Activated CD8-positive, alpha-beta memory T cell treated with anti-CD3 and anti-CD28 coated beads, Interleukin-2, amount 10 ng/mL, durations not matched to agents 7 days and 5 days (primary cell): ENCODE measurements at regions of chr5 and their contacts with region 1.

Region 1: DNA sequence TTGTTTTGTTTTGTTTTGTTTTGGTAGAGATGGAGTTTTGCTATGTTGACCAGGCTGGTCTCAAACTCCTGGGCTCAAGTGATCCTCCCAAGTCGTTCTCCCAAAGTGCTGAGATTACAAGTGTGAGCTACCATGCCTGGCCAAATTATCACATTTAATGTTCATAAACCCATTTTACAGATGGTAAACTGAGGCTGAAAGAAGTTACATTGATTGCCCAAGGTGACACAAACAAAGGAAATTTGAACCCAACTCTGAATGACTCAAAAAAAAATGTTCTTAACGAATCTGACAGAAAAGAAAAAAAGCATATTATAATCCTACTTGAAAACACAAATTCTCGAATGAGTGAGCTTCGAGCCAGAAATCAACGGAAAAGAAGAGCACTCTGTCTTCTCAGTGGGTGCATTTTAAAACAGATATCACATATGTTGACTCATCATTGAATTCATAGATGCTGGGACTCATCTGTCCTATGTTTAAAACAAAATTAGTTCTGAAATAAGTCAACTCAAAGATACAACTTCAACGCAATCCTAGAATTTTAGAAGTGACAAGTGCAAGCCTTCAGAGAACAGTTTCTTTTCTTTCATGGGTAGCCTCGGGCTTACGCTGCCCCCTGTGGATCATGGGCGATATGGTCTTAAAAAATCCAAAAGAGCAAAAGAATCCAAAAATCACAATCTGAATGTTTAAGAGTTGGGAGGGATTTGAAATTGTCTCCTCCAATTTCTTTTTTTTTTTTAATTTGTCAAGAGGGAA is 28.4 kb downstream of the TIMD4 start:
- DNase-seq: peak; percentile 80
- ATAC-seq: peak; percentile 84
- H3K4me3 Mint-ChIP-seq: peak overlapping the region; percentile 29
- H3K27ac Mint-ChIP-seq: peak overlapping the region; percentile 78
- H3K4me1 Mint-ChIP-seq: peaks cover 60% of the 10 kb centered on the region
- H3K27me3 Mint-ChIP-seq: no peaks in the 10 kb centered on the region

Region 2: GRCh38 chr5:156686796-156687195 is 247.8 kb before region 1 on chr5:
- CTCF ChIA-PET with region 1: no interaction called
- DNase-seq: no peak
- ATAC-seq: no peak
- H3K4me3 Mint-ChIP-seq: no peak overlapping the region
- H3K27ac Mint-ChIP-seq: no peak overlapping the region
- H3K4me1 Mint-ChIP-seq: no peaks in the 10 kb centered on the region
- H3K27me3 Mint-ChIP-seq: peaks cover 70% of the 10 kb centered on the region

Region 3: GRCh38 chr5:156755421-156756087 is 179.1 kb before region 1 on chr5:
- CTCF ChIA-PET with region 1: no interaction called
- DNase-seq: no peak
- ATAC-seq: no peak
- H3K4me3 Mint-ChIP-seq: no peak overlapping the region
- H3K27ac Mint-ChIP-seq: no peak overlapping the region
- H3K4me1 Mint-ChIP-seq: peaks cover 8% of the 10 kb centered on the region
- H3K27me3 Mint-ChIP-seq: peaks cover 2% of the 10 kb centered on the region

Region 4: GRCh38 chr5:156913719-156914370 is 20.8 kb before region 1 on chr5:
- CTCF ChIA-PET with region 1: interaction called, 26 read pairs
- DNase-seq: peak; percentile 64
- ATAC-seq: peak; percentile 87
- H3K4me3 Mint-ChIP-seq: peak overlapping the region; percentile 57
- H3K27ac Mint-ChIP-seq: peak overlapping the region; percentile 97
- H3K4me1 Mint-ChIP-seq: peaks cover 37% of the 10 kb centered on the region
- H3K27me3 Mint-ChIP-seq: no peaks in the 10 kb centered on the region

Region 5: DNA sequence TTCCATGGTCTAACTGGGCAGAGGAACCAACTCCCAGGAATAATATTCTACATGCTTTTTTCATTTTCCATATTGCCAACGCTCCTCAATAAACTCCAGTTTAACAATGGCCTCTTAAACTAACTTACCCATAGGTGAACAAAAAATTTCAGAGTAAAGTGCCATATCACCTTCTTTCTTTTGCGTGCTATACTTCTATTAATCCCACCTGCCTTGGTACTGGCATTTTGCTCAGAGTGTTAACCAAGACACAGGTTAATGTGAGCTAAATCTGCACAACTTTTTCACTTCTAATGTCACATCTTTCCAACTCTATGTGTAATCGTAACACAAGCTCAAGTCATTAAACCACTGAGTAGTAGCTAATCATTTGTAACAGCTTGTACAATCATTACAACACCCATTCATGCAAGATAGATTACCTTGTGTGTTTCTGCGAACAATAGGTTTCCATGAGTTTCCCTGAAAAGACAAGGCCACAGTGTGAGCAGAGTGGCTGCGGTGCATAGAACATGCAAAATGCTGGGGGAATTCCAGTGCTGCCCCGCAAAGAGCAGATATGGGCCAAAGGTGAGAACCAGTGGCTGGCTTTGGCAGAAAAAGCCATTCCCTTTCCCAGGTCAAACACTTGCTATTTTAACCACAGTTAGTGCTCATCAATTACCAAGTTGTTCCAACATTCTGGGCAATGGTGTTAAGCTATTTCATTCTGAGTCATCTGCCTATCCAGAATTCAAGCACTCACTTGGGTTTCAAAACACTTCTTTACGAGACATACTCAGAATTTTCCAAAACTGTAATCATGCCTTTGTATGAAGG is 14.4 kb before region 1 on chr5:
- CTCF ChIA-PET with region 1: interaction called, 26 read pairs
- DNase-seq: peak; percentile 80
- ATAC-seq: peak; percentile 68
- H3K4me3 Mint-ChIP-seq: peak overlapping the region; percentile 73
- H3K27ac Mint-ChIP-seq: peak overlapping the region; percentile 91
- H3K4me1 Mint-ChIP-seq: peaks cover 55% of the 10 kb centered on the region
- H3K27me3 Mint-ChIP-seq: no peaks in the 10 kb centered on the region

Region 6: GRCh38 chr5:157026789-157027424 is 92.3 kb after region 1 on chr5:
- CTCF ChIA-PET with region 1: interaction called, 11 read pairs
- DNase-seq: no peak
- ATAC-seq: no peak
- H3K4me3 Mint-ChIP-seq: no peak overlapping the region
- H3K27ac Mint-ChIP-seq: peak overlapping the region; percentile 90
- H3K4me1 Mint-ChIP-seq: peaks cover 80% of the 10 kb centered on the region
- H3K27me3 Mint-ChIP-seq: no peaks in the 10 kb centered on the region